Psoas muscle (tissue), 8 donors: ENCODE measurements at regions of chrX and their contacts with region 1.

Region 1: DNA sequence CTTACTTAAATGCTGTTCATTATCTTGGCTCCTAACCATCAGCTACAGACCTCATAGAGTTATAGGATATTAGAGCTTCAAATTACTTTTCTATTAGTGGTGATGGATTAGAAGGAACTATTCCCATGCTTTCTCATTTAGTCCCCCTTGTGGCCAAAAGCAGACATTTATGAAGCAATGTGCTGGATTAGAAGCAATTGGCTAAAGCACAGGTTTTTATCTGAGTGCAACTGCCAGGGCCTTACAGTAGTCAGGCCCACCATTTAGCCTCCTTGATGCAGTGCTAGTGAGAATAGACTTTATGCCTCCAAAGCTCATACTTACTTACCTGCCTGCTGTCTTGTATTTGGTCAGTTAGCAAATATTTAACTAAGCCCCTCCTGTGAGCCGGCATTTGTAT is 93.0 kb downstream of the TSPAN7 start:
- DNase-seq: no peak
- ATAC-seq: peak in 1 of 4 donors; percentile 51
- H3K4me3 ChIP-seq: no peak overlapping the region
- H3K27ac ChIP-seq: no peak overlapping the region
- H3K4me1 ChIP-seq: peaks cover 8% of the 10 kb centered on the region
- H3K27me3 ChIP-seq: no peaks in the 10 kb centered on the region
- CTCF ChIP-seq: peak; percentile 50

Region 2: DNA sequence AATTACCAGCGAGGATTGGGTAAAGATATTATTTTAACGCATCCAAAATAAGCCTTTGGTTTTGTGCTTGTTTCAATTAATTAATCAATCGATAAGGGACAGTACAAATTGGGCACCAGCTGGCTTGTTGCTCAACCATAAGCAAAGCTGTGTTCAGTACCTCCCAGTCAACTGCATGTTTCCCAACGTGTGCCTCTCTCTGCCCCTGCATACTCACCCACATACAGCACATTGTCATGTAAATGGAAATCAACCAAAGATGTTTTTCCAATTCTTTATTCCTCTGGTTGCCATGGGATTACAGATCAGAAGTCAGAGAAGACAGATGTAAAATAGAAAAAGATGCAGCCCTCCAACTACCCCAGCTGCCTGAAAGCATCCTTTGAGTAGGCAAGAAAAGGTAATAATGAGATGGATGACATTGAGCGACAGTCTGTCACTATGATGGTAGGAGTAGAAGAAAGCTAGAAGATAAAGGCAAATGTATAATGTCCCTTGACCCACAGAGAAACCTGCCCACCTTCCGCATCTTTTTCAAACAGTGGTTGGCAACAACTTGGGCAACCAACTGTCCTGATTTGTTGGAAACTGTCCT is 185.6 kb before region 1 on chrX:
- intact Hi-C with region 1: loop called in 1 of 2 experiments (anchors 10 kb)
- DNase-seq: no peak
- ATAC-seq: no peak
- H3K4me3 ChIP-seq: no peak overlapping the region
- H3K27ac ChIP-seq: no peak overlapping the region
- H3K4me1 ChIP-seq: no peaks in the 10 kb centered on the region
- H3K27me3 ChIP-seq: peaks cover 0 to 2% (median 0%) of the 10 kb centered on the region in 3 donors
- CTCF ChIP-seq: no peak

Region 3: DNA sequence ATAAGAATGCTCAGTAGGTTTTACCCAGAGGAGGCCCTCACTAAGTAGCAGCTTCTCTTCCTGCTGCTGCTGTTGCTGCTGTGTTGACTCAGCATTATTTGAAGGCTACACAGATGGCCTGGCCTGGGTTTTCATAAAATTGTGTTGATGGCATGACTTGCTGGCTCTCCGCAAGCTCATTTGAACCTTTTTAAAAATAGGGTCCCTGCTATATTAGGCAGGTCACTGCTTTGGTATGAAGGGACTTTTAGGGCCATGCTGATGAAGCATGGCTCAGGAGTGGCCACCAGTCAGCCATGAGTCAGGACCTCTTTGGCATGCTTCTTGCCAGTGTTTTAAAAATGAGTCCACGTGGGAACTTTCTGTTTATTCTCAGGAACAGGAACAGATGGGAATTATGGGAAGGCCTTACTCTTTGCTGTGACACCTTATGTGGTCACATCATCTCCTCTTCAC is 275.7 kb after region 1 on chrX:
- intact Hi-C with region 1: no loop called
- DNase-seq: peak; percentile 19 to 55
- ATAC-seq: peak; percentile 95 to 98 (median 96)
- H3K4me3 ChIP-seq: no peak overlapping the region
- H3K27ac ChIP-seq: peak overlapping the region; percentile 78
- H3K4me1 ChIP-seq: no peaks in the 10 kb centered on the region
- H3K27me3 ChIP-seq: peaks cover 0 to 8% (median 0%) of the 10 kb centered on the region in 3 donors
- CTCF ChIP-seq: no peak